K562 (cell line): ENCODE measurements at regions of chr2 and their contacts with region 1.

Region 1: GRCh38 chr2:110741491-110741980 is 9.2 kb downstream of the ACOXL start:
- DNase-seq: peak; percentile 20 to 35 (median 30)
- ATAC-seq: peak; percentile 80
- H3K4me3 ChIP-seq: no peak overlapping the region
- H3K27ac ChIP-seq: no peak overlapping the region
- H3K4me1 ChIP-seq: peaks cover 0 to 10% of the 10 kb centered on the region in 2 experiments; a peak in 3 of 5 replicates
- H3K27me3 ChIP-seq: peaks cover 7 to 22% of the 10 kb centered on the region in 2 experiments; a peak in 3 of 5 replicates
- CTCF ChIP-seq: peak; percentile 14 to 49 (median 39); a peak in 5 of 6 replicates
- EP300 ChIP-seq: no peak
- POLR2A ChIP-seq: no peak
- RAD21 ChIP-seq: no peak

Region 2: DNA sequence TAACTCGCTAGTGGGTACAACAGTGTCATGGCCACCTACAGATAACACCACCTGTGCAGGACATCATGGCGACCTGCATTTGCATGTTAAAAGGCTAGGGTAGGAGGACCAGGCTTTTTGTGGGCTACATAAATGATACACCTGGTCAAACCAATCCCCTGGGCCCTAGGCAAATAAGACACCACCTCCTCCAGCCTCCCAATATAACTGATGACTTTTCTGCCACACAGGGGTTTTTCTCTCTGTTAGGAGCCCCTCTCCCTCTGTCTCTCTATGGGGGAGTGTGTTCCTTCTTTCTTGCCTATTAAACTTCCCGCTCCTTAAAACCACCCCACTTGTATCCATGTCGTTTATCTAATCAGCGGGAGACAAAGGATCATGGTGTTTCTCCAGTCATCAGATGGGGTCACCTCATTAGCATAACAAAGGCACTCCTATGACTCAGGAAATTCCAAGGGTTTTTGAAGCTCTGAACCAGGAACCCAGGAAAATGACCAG is 52.9 kb before region 1 on chr2:
- CTCF ChIA-PET with region 1: no interaction called
- POLR2A ChIA-PET with region 1: interaction called, 3 read pairs
- in situ Hi-C with region 1: loop called (anchors 5 kb)
- intact Hi-C with region 1: no loop called
- DNase-seq: no peak
- ATAC-seq: no peak
- H3K4me3 ChIP-seq: no peak overlapping the region
- H3K27ac ChIP-seq: no peak overlapping the region
- H3K4me1 ChIP-seq: peaks cover 14 to 38% of the 10 kb centered on the region in 2 experiments; a peak in 4 of 5 replicates
- H3K27me3 ChIP-seq: no peaks in the 10 kb centered on the region
- CTCF ChIP-seq: no peak
- EP300 ChIP-seq: no peak
- POLR2A ChIP-seq: no peak
- RAD21 ChIP-seq: no peak